Posterior vena cava (tissue), 2 donors: ENCODE measurements at regions of chr14 and their contacts with region 1.

Region 1: GRCh38 chr14:66708267-66708666 is 200.3 kb downstream of the GPHN start:
- DNase-seq: no peak

Region 2: GRCh38 chr14:66680216-66680615 is 28.1 kb before region 1 on chr14:
- intact Hi-C with region 1: loop called in 1 of 2 experiments (anchors 1 kb)
- DNase-seq: no peak

Region 3: DNA sequence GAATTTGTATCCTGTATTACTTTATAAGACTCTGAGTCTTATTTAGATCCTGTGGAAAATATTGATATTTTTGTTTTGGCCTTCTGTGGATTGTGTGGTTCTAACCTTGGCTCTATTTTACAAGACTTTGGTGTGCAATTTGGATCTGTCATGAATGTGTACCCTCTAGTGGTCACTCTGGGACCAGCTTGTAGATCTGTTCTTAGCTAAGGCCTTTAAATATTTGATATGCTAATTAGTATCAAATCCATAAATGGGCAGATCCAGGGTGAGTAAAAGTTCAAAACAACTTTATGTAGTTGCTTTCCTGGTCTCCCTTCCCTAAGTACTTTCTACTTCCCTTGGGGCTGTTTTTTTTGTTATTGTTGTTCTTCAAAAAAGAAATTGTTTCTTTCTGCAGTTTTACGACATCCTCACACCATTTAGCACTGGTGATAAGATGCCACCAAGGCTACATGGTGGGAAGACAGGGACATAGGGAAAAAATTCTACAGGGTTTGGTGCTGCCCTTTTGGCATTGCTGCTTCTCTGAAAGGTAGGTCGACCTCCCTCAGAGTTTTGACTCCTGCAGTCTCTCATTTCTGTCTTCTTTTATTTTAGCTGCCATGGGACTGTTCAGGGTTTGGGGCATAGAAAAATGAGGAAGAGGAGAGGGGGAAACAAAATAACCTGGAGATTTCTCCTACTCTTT is 38.2 kb after region 1 on chr14:
- intact Hi-C with region 1: no loop called
- DNase-seq: no peak

Region 4: GRCh38 chr14:67137744-67138371 is 429.6 kb after region 1 on chr14:
- intact Hi-C with region 1: no loop called
- DNase-seq: no peak